Spleen (tissue), 13 donors: ENCODE measurements at regions of chr21 and their contacts with region 1.

Region 1: GRCh38 chr21:45129189-45129923 is 55.0 kb downstream of the ADARB1 start:
- DNase-seq: peak; percentile 69
- H3K4me3 ChIP-seq: no peak overlapping the region
- H3K27ac ChIP-seq: peak overlapping the region in 6 of 8 donors; percentile 2 to 72 (median 50)
- H3K4me1 ChIP-seq: peaks cover 33 to 92% (median 82%) of the 10 kb centered on the region in 6 donors
- H3K27me3 ChIP-seq: no peaks in the 10 kb centered on the region
- CTCF ChIP-seq: no peak
- POLR2A ChIP-seq: no peak

Region 2: DNA sequence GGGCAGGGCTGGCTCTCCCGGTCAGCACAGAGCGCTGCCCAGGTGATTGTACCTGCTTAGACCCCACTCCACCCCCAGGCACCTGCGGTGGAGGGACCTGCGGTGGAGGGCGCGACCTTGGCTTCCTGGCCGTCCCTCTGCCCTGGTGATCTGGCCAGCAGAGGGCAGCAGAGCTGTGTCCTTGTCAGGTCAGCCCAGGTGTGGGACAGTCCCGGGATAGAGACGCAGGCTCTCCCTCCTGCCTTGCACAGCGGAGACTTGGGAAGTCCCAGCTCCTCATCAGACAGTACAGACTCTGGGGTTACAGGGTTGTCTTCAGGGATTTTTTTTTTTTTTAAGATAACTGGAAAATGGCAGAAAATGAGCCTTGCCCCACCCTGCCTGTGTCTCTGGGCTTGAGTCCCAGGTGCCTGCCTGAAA is 179.6 kb before region 1 on chr21:
- intact Hi-C with region 1: loop called (anchors 5 kb)
- DNase-seq: peak; percentile 96
- H3K4me3 ChIP-seq: no peak overlapping the region
- H3K27ac ChIP-seq: peak overlapping the region in 2 of 8 donors; percentile 9 to 19
- H3K4me1 ChIP-seq: peaks cover 8 to 89% (median 44%) of the 10 kb centered on the region in 6 donors
- H3K27me3 ChIP-seq: no peaks in the 10 kb centered on the region
- CTCF ChIP-seq: peak; percentile 89 to 98 (median 95)
- POLR2A ChIP-seq: no peak

Region 3: DNA sequence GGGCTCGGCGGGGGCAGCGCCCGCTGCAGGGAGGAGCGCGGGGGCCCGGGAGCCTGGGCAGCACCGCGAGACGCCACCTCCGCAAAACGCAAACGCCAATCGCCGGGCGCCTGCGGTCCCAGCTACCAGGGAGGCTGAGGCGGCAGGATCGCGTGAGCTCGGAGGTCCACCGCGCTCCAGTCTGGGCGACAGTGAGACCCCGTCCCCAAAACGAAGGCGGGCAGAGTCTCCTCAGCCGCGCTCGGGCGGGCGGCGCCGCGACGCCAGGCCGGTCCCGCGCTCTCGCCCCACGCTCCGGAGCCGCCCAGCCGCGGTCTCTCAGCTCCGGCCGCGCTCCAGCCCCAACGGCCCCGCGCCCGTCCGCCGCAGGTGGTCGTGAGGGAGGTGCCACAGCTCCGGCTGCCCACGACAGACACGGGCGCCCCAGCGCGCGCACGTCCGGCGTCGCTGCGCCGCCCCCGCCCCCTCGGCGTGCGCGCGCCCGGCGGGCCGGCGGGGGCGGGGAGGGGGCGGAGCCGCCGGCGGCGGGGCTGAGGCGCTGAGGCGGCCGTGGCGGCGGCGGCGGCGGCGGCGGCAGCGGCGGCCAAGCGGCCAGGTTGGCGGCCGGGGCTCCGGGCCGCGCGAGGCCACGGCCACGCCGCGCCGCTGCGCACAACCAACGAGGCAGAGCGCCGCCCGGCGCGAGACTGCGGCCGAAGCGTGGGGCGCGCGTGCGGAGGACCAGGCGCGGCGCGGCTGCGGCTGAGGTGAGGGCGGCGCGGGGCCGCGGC is 55.1 kb before region 1 on chr21 and contains the start of gene ADARB1:
- intact Hi-C with region 1: loop called (anchors 10 kb)
- DNase-seq: peak; percentile 91
- H3K4me3 ChIP-seq: peak within 1 kb of the TSS; percentile 83 to 98 (median 89)
- H3K27ac ChIP-seq: peak within 1 kb of the TSS; percentile 40 to 93 (median 87)
- H3K4me1 ChIP-seq: peaks cover 30 to 58% (median 48%) of the 10 kb centered on the region in 6 donors
- H3K27me3 ChIP-seq: peaks cover 0 to 9% (median 0%) of the 10 kb centered on the region in 7 donors
- CTCF ChIP-seq: no peak
- POLR2A ChIP-seq: peak in 1 of 3 donors; percentile 35
- total RNA-seq, gene ADARB1: 26.0 to 50.8 (median 34.7) TPM

Region 4: DNA sequence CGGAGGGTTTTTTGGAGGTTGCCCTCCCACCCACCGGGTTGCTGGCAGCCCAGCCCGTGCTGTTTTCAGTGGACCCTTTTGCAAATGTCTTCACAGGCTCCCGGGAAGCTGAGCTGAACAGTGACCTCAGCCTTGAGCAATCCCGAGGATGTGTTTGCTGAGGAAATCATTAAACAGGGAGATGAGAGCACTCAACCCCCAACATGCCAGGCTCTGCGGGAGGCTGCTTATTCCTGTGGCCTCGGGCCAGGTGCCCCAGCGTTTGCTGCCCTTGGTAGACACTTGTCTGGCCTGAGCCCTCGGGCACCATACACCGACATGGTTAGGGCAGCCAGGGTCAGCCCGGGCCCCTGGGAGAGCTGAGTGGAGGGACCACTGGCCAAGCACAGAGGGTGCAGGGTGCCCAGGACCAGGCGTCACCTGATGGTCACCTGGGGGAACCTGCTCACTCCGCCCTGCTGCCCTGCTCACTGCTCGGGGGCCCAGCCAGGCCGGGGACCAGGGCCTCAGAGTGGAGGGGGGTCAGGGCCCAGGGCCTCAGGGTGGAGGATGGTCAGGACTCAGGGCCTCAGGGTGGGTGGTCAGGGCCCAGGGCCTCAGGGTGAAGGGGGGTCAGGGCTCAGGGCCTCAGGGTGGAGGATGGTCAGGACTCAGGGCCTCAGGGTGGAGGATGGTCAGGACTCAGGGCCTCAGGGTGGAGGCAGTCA is 200.9 kb after region 1 on chr21:
- intact Hi-C with region 1: no loop called
- DNase-seq: peak; percentile 58
- H3K4me3 ChIP-seq: no peak overlapping the region
- H3K27ac ChIP-seq: peak overlapping the region in 2 of 8 donors; percentile 36 to 42
- H3K4me1 ChIP-seq: peaks cover 0 to 17% (median 4%) of the 10 kb centered on the region in 6 donors
- H3K27me3 ChIP-seq: peaks cover 0 to 7% (median 0%) of the 10 kb centered on the region in 7 donors
- CTCF ChIP-seq: no peak
- POLR2A ChIP-seq: no peak